MCF 10A (cell line): ENCODE measurements at regions of chr3 and their contacts with region 1.

Region 1: GRCh38 chr3:12841149-12841970 is at the start of gene RPL32:
- DNase-seq: peak; percentile 95
- H3K4me3 Mint-ChIP-seq: peak within 1 kb of the TSS; percentile 96
- H3K27ac Mint-ChIP-seq: peak within 1 kb of the TSS; percentile 100
- H3K4me1 Mint-ChIP-seq: peaks cover 25% of the 10 kb centered on the region
- H3K27me3 Mint-ChIP-seq: no peaks in the 10 kb centered on the region
- CTCF ChIP-seq: peak; percentile 58
- total RNA-seq, gene RPL32: 2,288 and 2,498 TPM in 2 replicates

Region 2: GRCh38 chr3:12316776-12317243 is 524.5 kb before region 1 on chr3:
- CTCF ChIA-PET with region 1: no interaction called
- POLR2A ChIA-PET with region 1: no interaction called
- intact Hi-C with region 1: no loop called
- DNase-seq: no peak
- H3K4me3 Mint-ChIP-seq: no peak overlapping the region
- H3K27ac Mint-ChIP-seq: no peak overlapping the region
- H3K4me1 Mint-ChIP-seq: peaks cover 10% of the 10 kb centered on the region
- H3K27me3 Mint-ChIP-seq: no peaks in the 10 kb centered on the region
- CTCF ChIP-seq: no peak

Region 3: GRCh38 chr3:12556671-12557472 is 284.5 kb before region 1 on chr3 and contains the start of gene MKRN2:
- CTCF ChIA-PET with region 1: interaction called, 6 read pairs
- POLR2A ChIA-PET with region 1: interaction called, 16 read pairs
- intact Hi-C with region 1: no loop called
- DNase-seq: peak; percentile 89
- H3K4me3 Mint-ChIP-seq: peak within 1 kb of the TSS; percentile 73
- H3K27ac Mint-ChIP-seq: peak within 1 kb of the TSS; percentile 65
- H3K4me1 Mint-ChIP-seq: peaks cover 35% of the 10 kb centered on the region
- H3K27me3 Mint-ChIP-seq: no peaks in the 10 kb centered on the region
- CTCF ChIP-seq: no peak
- total RNA-seq, gene MKRN2: 22.0 and 25.6 TPM in 2 replicates

Region 4: GRCh38 chr3:12706504-12707253 is 134.7 kb before region 1 on chr3:
- CTCF ChIA-PET with region 1: interaction called, 5 read pairs
- POLR2A ChIA-PET with region 1: interaction called, 9 read pairs
- intact Hi-C with region 1: loop called (anchors 1 kb)
- DNase-seq: peak; percentile 91
- H3K4me3 Mint-ChIP-seq: no peak overlapping the region
- H3K27ac Mint-ChIP-seq: no peak overlapping the region
- H3K4me1 Mint-ChIP-seq: peaks cover 42% of the 10 kb centered on the region
- H3K27me3 Mint-ChIP-seq: no peaks in the 10 kb centered on the region
- CTCF ChIP-seq: peak; percentile 59

Region 5: DNA sequence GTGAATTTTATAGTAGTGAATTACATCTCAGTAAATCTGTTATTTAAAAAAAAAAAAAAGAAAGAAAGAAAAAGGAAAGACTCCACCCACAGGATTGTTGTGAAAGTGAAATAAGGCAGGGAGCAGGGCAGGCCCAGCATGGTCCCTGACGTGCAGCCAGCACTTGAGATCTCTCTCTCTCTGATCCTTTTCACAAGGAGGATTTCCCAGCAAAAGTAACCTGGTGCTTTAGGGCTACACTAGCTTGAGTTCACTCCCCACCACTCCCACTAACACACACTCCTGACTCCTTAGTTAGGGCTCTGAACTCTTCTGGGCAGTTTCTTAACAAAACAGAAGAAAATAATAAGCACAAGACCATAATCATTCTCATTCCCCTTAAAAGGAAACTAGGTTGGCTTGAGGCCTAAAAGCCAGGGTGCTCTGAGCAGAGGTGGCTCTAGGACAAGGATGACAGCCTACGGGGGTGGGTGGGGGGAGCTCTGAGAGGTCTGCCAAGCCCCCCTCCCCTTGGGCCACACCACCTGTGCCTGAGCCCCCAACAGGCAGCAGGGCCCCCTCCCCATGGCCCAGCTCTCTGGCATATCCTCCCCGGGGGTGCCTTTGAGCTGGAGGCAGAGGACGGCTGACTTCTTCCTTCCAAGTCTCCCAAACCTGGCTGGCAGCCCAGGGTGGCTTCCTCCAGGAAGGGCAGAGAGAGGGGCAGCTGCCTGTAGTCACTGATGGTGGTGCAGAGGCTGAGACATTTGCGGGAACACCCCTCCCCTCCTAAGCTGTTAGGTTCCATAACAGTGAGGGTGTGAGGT is 83.1 kb before region 1 on chr3:
- CTCF ChIA-PET with region 1: interaction called, 8 read pairs
- POLR2A ChIA-PET with region 1: interaction called, 14 read pairs
- intact Hi-C with region 1: no loop called
- DNase-seq: peak; percentile 61
- H3K4me3 Mint-ChIP-seq: peak overlapping the region; percentile 43
- H3K27ac Mint-ChIP-seq: peak overlapping the region; percentile 74
- H3K4me1 Mint-ChIP-seq: peaks cover 53% of the 10 kb centered on the region
- H3K27me3 Mint-ChIP-seq: no peaks in the 10 kb centered on the region
- CTCF ChIP-seq: no peak

Region 6: GRCh38 chr3:12825156-12825555 is 16.2 kb before region 1 on chr3:
- CTCF ChIA-PET with region 1: interaction called, 38 read pairs
- POLR2A ChIA-PET with region 1: interaction called, 39 read pairs
- intact Hi-C with region 1: no loop called
- DNase-seq: no peak
- H3K4me3 Mint-ChIP-seq: no peak overlapping the region
- H3K27ac Mint-ChIP-seq: no peak overlapping the region
- H3K4me1 Mint-ChIP-seq: no peaks in the 10 kb centered on the region
- H3K27me3 Mint-ChIP-seq: no peaks in the 10 kb centered on the region
- CTCF ChIP-seq: no peak

Region 7: GRCh38 chr3:12830785-12831156 is 10.6 kb before region 1 on chr3:
- CTCF ChIA-PET with region 1: interaction called, 38 read pairs
- POLR2A ChIA-PET with region 1: interaction called, 39 read pairs
- intact Hi-C with region 1: no loop called
- DNase-seq: peak; percentile 21
- H3K4me3 Mint-ChIP-seq: no peak overlapping the region
- H3K27ac Mint-ChIP-seq: no peak overlapping the region
- H3K4me1 Mint-ChIP-seq: no peaks in the 10 kb centered on the region
- H3K27me3 Mint-ChIP-seq: no peaks in the 10 kb centered on the region
- CTCF ChIP-seq: peak; percentile 13

Region 8: DNA sequence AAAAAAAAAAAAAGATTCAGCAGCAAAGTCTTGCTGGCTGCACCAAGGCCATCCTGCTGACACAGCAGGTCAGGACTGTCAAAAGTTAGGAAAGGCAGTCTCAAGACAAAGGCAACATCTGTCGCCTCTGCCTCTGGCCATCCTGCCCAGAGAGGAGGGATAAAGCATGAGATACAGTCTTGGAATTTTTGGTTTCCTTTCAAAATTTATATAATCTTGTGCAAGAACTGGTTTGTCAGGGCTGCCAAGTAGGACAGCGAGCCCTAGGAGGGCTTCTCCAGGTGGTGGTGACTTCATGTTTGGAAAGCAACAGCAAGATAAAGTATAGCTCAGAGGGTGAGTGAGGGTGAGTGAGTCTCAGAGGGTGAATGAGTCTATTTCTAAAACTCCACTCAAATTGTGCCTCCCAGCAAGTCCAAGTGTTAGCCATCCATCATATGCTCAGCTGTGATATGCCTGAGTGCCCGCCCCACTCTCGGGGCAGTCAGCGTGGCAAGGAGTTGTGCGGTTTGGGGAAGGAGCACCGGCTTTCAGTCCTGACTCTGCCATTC is 11.9 kb after region 1 on chr3:
- CTCF ChIA-PET with region 1: interaction called, 15 read pairs
- POLR2A ChIA-PET with region 1: interaction called, 10 read pairs
- intact Hi-C with region 1: no loop called
- DNase-seq: peak; percentile 43
- H3K4me3 Mint-ChIP-seq: no peak overlapping the region
- H3K27ac Mint-ChIP-seq: no peak overlapping the region
- H3K4me1 Mint-ChIP-seq: no peaks in the 10 kb centered on the region
- H3K27me3 Mint-ChIP-seq: peaks cover 19% of the 10 kb centered on the region
- CTCF ChIP-seq: no peak

Region 9: DNA sequence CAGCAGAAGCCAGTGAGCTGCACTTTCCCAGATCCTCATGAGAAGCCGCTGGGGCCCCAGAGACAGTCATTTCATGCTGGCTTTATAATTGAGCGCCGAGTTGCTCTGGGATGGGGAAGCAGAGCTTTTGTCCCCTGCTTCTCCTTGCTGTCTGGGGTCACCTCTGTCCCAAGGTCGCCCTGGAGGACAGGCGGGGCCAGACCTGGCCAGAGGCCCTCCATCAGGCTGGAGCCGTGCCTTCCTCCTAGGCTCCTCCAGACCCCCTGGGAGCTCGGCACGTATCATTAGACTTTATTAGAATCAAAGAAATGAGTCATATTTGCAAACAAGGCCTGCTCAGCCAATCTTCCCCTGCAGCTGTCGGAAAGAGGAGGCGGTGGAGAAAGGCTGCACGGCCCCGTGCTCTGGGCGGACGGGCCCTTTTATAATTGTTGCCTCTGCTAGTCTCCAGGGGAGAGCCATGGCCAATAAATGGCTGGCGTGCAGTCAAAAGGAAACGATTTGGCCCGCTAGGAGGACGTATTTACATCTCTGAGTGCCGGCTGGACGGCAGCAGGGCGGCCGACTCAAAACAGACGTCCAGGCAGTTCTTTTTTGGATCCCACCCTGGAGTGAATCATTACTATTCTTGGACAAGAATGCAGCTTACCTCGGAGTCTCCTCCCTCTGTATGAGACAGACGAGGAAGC is 1611.5 kb after region 1 on chr3:
- CTCF ChIA-PET with region 1: no interaction called
- POLR2A ChIA-PET with region 1: no interaction called
- intact Hi-C with region 1: no loop called
- DNase-seq: peak; percentile 88
- H3K4me3 Mint-ChIP-seq: no peak overlapping the region
- H3K27ac Mint-ChIP-seq: peak overlapping the region; percentile 67
- H3K4me1 Mint-ChIP-seq: peaks cover 17% of the 10 kb centered on the region
- H3K27me3 Mint-ChIP-seq: no peaks in the 10 kb centered on the region
- CTCF ChIP-seq: no peak